ENCODE measurements at regions of chr7 and their contacts with region 1.

Region 1: DNA sequence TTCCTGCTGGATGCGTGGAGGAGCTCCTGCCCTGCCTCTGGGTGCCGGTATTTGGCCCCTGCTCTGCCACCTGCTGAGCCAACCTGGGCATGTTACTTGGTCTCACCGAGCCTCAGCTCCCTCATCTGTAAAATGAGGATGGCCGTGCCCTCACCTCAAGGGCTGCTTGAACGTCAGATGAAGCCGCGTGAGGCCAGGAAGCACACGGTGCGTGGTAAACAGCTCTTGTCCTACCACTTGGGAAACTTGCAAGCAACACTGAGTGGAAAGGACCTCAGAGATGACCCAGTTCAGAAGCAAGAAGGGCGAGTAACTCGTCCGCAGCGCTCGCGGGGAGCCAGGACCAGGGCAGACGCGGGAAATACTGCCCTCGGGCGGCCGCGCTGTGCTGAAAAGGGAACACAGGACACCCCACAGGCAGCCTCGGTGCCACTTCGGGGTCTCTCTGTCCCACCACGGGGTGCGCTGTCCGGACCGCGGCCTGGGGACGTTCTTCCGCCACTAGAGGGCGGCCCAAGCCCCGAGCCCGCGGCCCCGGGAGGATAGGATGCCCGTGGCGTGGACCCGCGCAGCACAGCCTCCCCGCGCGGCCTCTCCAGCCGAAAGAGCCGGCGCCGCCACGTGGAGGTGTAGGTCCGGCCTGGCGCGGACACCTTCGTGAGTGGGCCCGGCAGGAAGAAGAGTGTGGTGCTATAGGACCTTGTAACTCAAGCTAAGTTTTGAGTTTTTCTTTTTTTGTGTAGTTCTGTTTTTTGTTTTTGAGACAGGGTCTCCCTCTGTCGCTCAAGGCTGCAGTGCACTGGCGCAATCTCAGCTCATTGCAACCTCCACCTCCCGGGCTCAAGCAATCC is 94.1 kb downstream of the PRKAG2 start:
- DNase-seq: peak; percentile 44 to 76 (median 56)
- H3K4me3 ChIP-seq: peak overlapping the region in 45 of 59 donors; percentile 0 to 53 (median 29)
- H3K27ac ChIP-seq: peak overlapping the region in 13 of 59 donors; percentile 7 to 62 (median 29)
- H3K27me3 ChIP-seq: no peaks in the 10 kb centered on the region
- CTCF ChIP-seq: peak; percentile 47 to 97 (median 87)

Region 2: GRCh38 chr7:151871921-151872320 is 89.1 kb after region 1 on chr7:
- intact Hi-C with region 1: loop called in 1 of 2 experiments (anchors 5 kb)
- DNase-seq: no peak
- H3K4me3 ChIP-seq: no peak overlapping the region
- H3K27ac ChIP-seq: peak overlapping the region in 1 of 59 donors; percentile 2
- H3K27me3 ChIP-seq: no peaks in the 10 kb centered on the region
- CTCF ChIP-seq: peak in 19 of 56 donors; percentile 9 to 37 (median 19)

Region 3: DNA sequence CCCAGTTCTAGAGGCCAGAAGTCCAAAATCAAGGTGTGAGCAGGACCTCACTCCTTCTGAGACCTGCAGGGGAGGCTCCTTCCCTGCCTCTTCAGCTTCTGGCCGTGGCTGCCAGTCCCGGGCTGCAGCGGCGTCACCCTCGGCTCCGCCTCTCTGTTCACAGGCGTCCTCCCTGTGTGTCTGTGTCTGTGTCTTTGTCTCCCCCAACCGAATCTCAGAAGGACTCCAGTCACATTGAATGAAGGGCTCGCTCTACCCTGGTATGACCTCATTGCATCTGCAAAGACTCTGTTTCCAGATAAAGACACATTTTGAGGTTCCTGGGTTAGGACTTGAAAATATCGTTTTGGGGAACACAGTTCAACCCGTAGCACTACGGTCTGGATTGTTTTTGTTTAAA is 209.6 kb after region 1 on chr7:
- intact Hi-C with region 1: no loop called
- DNase-seq: peak in 8 of 10 donors; percentile 9 to 64 (median 54)
- H3K4me3 ChIP-seq: peak overlapping the region in 20 of 59 donors; percentile 3 to 46 (median 13)
- H3K27ac ChIP-seq: peak overlapping the region in 1 of 59 donors; percentile 28
- H3K27me3 ChIP-seq: no peaks in the 10 kb centered on the region
- CTCF ChIP-seq: peak in 31 of 56 donors; percentile 5 to 38 (median 20)

Measured in dorsolateral prefrontal cortex (tissue), 120 donors.